HCT116 (cell line): ENCODE measurements at regions of chr3 and their contacts with region 1.

Region 1: GRCh38 chr3:169668957-169669681 is 5.6 kb upstream of the MECOM start:
- DNase-seq: peak; percentile 38
- ATAC-seq: peak; percentile 99
- H3K4me3 ChIP-seq: peak overlapping the region; percentile 16 to 17
- H3K27ac ChIP-seq: no peak overlapping the region
- H3K4me1 ChIP-seq: peaks cover 3 to 13% of the 10 kb centered on the region in 2 experiments; a peak in 3 of 4 replicates
- H3K27me3 ChIP-seq: peaks cover 41% of the 10 kb centered on the region
- CTCF ChIP-seq: peak; percentile 72 to 80 (median 78); a peak in 5 of 6 replicates
- POLR2A ChIP-seq: no peak
- RAD21 ChIP-seq: peak; percentile 92

Region 2: DNA sequence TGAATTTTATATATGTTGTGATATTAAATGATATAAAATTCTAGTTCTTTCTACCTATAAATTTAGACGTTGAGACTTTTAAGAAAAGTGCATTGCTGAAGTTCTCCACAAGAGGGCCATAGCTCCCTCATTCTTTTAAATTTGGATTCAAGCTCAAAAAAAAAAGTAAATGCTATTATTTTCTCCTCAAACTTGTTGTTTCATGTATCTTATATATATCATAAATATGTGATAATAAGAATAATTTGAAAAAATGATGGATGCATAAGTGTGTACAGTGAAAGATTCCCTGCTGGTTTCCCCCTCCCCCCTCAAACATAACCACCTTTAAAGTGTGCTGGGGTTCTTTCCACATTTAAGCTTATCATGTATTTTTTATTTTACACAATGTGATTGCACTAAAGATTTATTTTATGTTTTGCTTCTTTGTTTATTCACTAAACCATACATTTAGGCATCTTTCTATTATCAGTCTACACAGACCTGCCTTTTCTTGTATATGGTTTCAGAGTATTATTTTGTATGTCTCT is 804.0 kb before region 1 on chr3:
- CTCF ChIA-PET with region 1: interaction called, 37 read pairs
- POLR2A ChIA-PET with region 1: no interaction called
- RAD21 ChIA-PET with region 1: interaction called in 1 of 2 experiments, 4 read pairs
- intact Hi-C with region 1: loop called (anchors 2 kb)
- DNase-seq: no peak
- ATAC-seq: no peak
- H3K4me3 ChIP-seq: no peak overlapping the region
- H3K27ac ChIP-seq: no peak overlapping the region
- H3K4me1 ChIP-seq: no peaks in the 10 kb centered on the region
- H3K27me3 ChIP-seq: peaks cover 16% of the 10 kb centered on the region
- CTCF ChIP-seq: peak; percentile 52 to 65 (median 61)
- POLR2A ChIP-seq: no peak
- RAD21 ChIP-seq: peak; percentile 60

Region 3: DNA sequence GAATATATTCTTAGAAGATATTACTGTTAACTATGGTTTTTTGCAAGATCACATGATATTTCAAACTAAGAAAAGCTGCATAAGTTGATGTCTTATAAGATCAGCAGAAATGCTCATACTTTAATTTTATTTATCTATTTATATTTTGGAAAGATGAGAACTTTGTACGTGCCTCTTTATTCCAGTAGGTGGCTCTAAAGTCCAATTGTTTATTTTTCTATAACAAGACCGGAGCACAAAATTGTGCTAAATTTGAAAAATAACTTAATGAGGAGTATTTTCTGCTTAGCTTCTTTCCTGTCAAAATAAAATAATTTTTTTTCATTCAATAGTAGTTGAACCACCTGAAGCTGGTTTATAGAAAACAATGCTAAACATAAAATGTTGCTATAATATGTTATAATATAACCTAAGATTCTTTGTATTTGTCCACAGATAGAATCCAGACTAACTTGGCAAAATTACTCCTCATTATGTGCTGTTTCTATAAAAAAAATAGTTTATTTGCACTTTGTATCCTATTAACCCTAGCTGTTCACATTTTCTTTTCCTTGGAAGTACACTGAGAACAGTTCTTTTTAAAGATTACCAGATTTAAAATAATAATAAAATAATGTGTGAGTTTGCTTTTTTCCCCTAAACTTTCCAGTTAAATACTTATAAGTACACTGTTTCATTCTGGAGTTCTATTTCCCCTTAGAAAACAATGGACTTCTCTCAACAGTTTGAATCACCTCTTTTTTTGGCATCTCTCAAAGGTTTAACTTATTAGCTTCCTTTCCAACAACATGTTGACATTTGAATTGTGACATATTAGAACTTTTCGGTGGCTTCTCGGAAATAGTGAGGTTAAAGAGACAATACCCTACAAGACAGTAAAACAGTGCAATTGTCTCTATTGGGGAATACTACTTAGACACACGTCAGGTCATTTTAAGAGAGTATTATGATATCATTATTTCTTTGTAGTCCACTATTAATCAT is 535.6 kb before region 1 on chr3:
- CTCF ChIA-PET with region 1: interaction called, 6 read pairs
- POLR2A ChIA-PET with region 1: no interaction called
- RAD21 ChIA-PET with region 1: interaction called in 1 of 2 experiments, 7 read pairs
- intact Hi-C with region 1: loop called (anchors 5 kb)
- DNase-seq: no peak
- ATAC-seq: no peak
- H3K4me3 ChIP-seq: no peak overlapping the region
- H3K27ac ChIP-seq: no peak overlapping the region
- H3K4me1 ChIP-seq: no peaks in the 10 kb centered on the region
- H3K27me3 ChIP-seq: peaks cover 17% of the 10 kb centered on the region
- CTCF ChIP-seq: peak; percentile 37 to 49 (median 41); a peak in 5 of 6 replicates
- POLR2A ChIP-seq: no peak
- RAD21 ChIP-seq: peak; percentile 61

Region 4: DNA sequence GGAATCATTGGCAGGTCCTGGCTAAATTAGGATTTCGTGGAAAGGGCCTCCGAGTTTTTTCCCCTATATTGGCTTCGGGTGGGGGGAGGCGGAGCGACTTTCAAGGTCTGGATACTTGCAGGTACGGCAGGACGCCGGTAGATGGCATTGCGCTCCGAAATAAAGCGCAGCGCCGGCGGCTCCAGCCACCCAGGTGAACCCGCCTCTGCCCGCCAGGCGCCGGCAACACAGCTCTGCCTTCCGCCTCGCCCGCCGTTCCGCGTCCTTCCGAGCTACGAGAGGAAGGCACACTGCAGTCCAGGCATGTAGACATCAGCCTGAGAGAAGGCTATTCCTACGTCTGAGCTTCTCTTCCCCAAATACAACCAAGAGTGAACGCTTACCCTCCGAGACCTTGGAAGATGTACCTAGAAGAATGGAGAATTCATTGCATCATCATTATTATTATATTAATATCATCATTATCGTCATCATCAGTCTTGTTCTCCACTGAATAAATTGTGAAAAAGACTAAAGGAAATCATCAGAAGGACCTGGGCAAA is 519.7 kb before region 1 on chr3:
- CTCF ChIA-PET with region 1: interaction called, 15 read pairs
- POLR2A ChIA-PET with region 1: no interaction called
- RAD21 ChIA-PET with region 1: interaction called in 1 of 2 experiments, 5 read pairs
- intact Hi-C with region 1: loop called (anchors 2 kb)
- DNase-seq: peak; percentile 67
- ATAC-seq: peak; percentile 93
- H3K4me3 ChIP-seq: peak overlapping the region; percentile 31 to 51
- H3K27ac ChIP-seq: no peak overlapping the region
- H3K4me1 ChIP-seq: peaks cover 2 to 24% of the 10 kb centered on the region in 2 experiments; a peak in 3 of 4 replicates
- H3K27me3 ChIP-seq: peaks cover 21% of the 10 kb centered on the region; the same call in 1 of the 2 replicates
- CTCF ChIP-seq: peak; percentile 73 to 78 (median 74)
- POLR2A ChIP-seq: no peak
- RAD21 ChIP-seq: peak; percentile 81

Region 5: DNA sequence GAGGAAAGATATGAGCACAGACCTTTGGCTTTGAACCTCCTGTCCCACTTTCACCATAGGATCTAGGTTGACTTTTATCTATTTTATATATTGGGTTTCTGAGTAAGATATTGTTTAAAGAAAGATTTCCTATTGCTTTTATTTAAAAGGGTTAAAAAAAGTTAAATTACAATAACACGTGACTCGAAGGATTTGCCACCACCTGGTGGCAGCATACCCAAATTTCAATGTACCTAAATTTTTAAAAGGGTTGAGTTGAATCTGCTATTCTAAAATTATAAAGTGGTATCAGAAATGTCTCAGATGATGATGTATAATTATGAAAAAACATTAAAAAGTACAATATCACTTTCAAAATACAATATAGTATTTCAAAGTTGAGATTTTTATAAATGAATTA is 374.0 kb before region 1 on chr3:
- CTCF ChIA-PET with region 1: interaction called, 3 read pairs
- POLR2A ChIA-PET with region 1: no interaction called
- RAD21 ChIA-PET with region 1: no interaction called
- intact Hi-C with region 1: loop called (anchors 1 kb)
- DNase-seq: peak; percentile 4
- ATAC-seq: no peak
- H3K4me3 ChIP-seq: no peak overlapping the region
- H3K27ac ChIP-seq: no peak overlapping the region
- H3K4me1 ChIP-seq: no peaks in the 10 kb centered on the region
- H3K27me3 ChIP-seq: no peaks in the 10 kb centered on the region
- CTCF ChIP-seq: peak; percentile 47 to 65 (median 58)
- POLR2A ChIP-seq: no peak
- RAD21 ChIP-seq: peak; percentile 61